ENCODE measurements at regions of chr17 and their contacts with region 1.

Region 1: DNA sequence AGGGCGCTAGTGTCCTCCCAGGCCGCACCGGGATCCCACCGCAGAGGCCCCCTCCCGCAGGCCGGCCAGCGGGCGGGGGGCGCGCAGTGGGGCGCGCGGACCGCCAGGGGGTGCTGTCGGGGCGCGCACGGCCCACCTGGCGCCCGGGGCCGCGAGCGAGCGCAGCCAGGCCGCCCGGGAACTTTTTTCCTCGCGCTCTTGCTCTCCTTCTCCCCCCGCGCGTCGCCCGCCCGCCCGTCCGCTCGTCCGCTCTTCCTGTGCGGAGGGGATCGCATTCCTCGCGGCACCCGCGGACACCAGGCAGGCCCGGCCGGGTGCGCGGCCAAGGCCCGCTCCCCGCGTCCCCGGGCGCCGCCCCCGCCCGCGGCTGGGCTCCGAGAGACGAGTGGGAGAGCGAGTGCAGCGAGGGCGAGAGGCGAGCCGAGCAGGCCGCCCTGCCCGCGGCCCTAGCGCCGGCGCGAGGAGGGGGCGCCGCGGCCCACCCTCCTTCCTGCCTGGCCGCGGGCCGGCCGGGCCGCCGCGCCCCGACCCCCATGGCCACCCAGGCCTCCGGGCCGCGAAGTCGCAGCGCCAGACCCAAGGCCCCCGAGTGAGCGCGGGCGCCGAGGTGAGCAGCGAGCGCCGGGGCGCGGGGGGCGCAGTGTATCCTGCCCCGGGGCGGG is at the start of gene RAI1:
- DNase-seq: peak; percentile 76
- H3K4me3 Mint-ChIP-seq: peak within 1 kb of the TSS; percentile 80
- H3K27ac Mint-ChIP-seq: peak within 1 kb of the TSS; percentile 46
- H3K4me1 Mint-ChIP-seq: peaks cover 38% of the 10 kb centered on the region
- H3K27me3 Mint-ChIP-seq: no peaks in the 10 kb centered on the region
- CTCF ChIP-seq: peak; percentile 82
- total RNA-seq, gene RAI1: 30.4 and 34.6 TPM in 2 replicates

Region 2: GRCh38 chr17:17568749-17569195 is 112.5 kb before region 1 on chr17:
- CTCF ChIA-PET with region 1: no interaction called
- POLR2A ChIA-PET with region 1: no interaction called
- intact Hi-C with region 1: no loop called
- DNase-seq: peak; percentile 64
- H3K4me3 Mint-ChIP-seq: no peak overlapping the region
- H3K27ac Mint-ChIP-seq: no peak overlapping the region
- H3K4me1 Mint-ChIP-seq: no peaks in the 10 kb centered on the region
- H3K27me3 Mint-ChIP-seq: no peaks in the 10 kb centered on the region
- CTCF ChIP-seq: peak; percentile 74

Region 3: GRCh38 chr17:17666111-17666714 is 15.1 kb before region 1 on chr17:
- CTCF ChIA-PET with region 1: interaction called, 10 read pairs
- POLR2A ChIA-PET with region 1: interaction called, 6 read pairs
- intact Hi-C with region 1: no loop called
- DNase-seq: peak; percentile 77
- H3K4me3 Mint-ChIP-seq: no peak overlapping the region
- H3K27ac Mint-ChIP-seq: no peak overlapping the region
- H3K4me1 Mint-ChIP-seq: peaks cover 25% of the 10 kb centered on the region
- H3K27me3 Mint-ChIP-seq: peaks cover 8% of the 10 kb centered on the region
- CTCF ChIP-seq: no peak

Region 4: GRCh38 chr17:17739388-17740066 is 58.2 kb after region 1 on chr17:
- CTCF ChIA-PET with region 1: interaction called, 10 read pairs
- POLR2A ChIA-PET with region 1: interaction called, 6 read pairs
- intact Hi-C with region 1: no loop called
- DNase-seq: peak; percentile 50
- H3K4me3 Mint-ChIP-seq: peak overlapping the region; percentile 52
- H3K27ac Mint-ChIP-seq: peak overlapping the region; percentile 81
- H3K4me1 Mint-ChIP-seq: peaks cover 59% of the 10 kb centered on the region
- H3K27me3 Mint-ChIP-seq: no peaks in the 10 kb centered on the region
- CTCF ChIP-seq: no peak

Region 5: GRCh38 chr17:17774009-17774881 is 92.9 kb after region 1 on chr17:
- CTCF ChIA-PET with region 1: interaction called, 13 read pairs
- POLR2A ChIA-PET with region 1: interaction called, 21 read pairs
- intact Hi-C with region 1: loop called (anchors 1 kb)
- DNase-seq: peak; percentile 86
- H3K4me3 Mint-ChIP-seq: no peak overlapping the region
- H3K27ac Mint-ChIP-seq: peak overlapping the region; percentile 92
- H3K4me1 Mint-ChIP-seq: peaks cover 31% of the 10 kb centered on the region
- H3K27me3 Mint-ChIP-seq: no peaks in the 10 kb centered on the region
- CTCF ChIP-seq: peak; percentile 73

Region 6: DNA sequence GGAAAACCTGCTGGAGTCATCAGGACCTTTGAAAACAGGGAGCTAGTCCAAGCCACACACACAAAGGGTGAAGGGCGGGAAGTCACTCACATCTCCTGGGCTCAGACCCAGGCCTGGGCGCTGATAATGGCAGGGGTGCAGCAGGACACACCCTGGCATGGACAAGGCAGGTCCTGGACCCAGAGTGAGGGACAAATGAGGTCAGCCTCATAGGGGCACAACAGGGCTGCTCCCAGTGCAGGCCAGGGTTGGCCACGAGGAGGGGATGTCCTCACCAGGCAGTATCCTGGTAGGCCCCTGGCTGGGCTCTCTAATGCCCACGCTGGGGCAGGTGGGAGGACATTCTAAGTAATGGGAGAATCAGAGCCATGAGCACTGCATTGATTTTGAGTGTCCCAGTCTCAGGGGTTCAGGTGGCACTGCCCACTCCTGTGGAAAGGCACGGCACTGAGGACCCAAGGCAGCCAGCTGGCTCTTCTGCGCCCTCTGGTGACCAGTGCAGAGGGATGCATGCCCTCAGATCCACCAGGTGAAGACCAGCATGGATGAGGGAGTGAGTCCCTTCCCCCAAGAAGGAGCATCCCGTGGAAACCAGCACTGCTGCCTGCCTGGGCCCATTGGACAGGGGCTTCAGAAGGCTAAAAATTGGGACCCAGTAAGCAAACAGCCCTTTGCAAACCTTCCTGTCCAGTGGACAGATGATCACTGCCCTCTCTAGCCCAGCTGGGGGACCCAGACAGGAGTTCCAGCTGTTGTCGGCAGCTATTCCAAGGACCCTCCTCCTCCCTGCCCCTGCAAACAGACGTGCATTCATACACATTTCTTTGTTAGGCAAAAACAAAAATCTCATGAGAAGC is 178.8 kb after region 1 on chr17:
- CTCF ChIA-PET with region 1: interaction called, 6 read pairs
- POLR2A ChIA-PET with region 1: interaction called, 6 read pairs
- intact Hi-C with region 1: loop called (anchors 1 kb)
- DNase-seq: peak; percentile 70
- H3K4me3 Mint-ChIP-seq: no peak overlapping the region
- H3K27ac Mint-ChIP-seq: no peak overlapping the region
- H3K4me1 Mint-ChIP-seq: peaks cover 5% of the 10 kb centered on the region
- H3K27me3 Mint-ChIP-seq: no peaks in the 10 kb centered on the region
- CTCF ChIP-seq: peak; percentile 94

Region 7: DNA sequence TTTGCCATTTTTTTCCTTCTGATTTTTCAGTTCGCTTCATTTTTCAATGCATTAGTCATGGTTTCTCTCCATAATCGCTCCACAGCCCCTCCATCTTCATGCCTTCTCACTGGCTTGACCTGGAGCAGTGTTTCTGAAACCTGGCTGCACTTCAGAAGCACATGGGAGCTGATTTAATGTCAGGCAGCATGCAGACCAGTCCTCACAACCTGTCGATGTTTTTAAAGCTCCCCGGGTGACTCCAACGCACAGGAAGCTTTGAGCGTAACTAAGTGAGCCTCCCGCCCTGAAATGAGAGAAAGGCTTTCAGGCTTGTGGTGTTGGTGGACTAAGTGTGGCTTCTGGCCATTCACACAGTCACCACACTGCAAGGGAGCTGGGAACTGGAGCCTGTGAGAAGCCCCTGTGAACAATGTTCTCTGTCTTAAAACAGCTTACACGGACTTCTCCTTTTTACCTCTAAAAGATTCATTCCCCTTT is 389.6 kb after region 1 on chr17:
- CTCF ChIA-PET with region 1: no interaction called
- POLR2A ChIA-PET with region 1: no interaction called
- intact Hi-C with region 1: no loop called
- DNase-seq: no peak
- H3K4me3 Mint-ChIP-seq: no peak overlapping the region
- H3K27ac Mint-ChIP-seq: no peak overlapping the region
- H3K4me1 Mint-ChIP-seq: no peaks in the 10 kb centered on the region
- H3K27me3 Mint-ChIP-seq: peaks cover 12% of the 10 kb centered on the region
- CTCF ChIP-seq: no peak

Region 8: GRCh38 chr17:18377437-18378204 is 696.3 kb after region 1 on chr17 and contains the start of gene EVPLL:
- CTCF ChIA-PET with region 1: no interaction called
- POLR2A ChIA-PET with region 1: no interaction called
- intact Hi-C with region 1: no loop called
- DNase-seq: peak; percentile 93
- H3K4me3 Mint-ChIP-seq: peak within 1 kb of the TSS; percentile 68
- H3K27ac Mint-ChIP-seq: peak within 1 kb of the TSS; percentile 19
- H3K4me1 Mint-ChIP-seq: peaks cover 15% of the 10 kb centered on the region
- H3K27me3 Mint-ChIP-seq: no peaks in the 10 kb centered on the region
- CTCF ChIP-seq: no peak
- total RNA-seq, gene EVPLL: 0.70 and 0.88 TPM in 2 replicates